Aorta (tissue), 5 donors: ENCODE measurements at regions of chr6 and their contacts with region 1.

Region 1: GRCh38 chr6:96563853-96564252 is 925 bp downstream of the FHL5 start:
- DNase-seq: no peak
- ATAC-seq: no peak
- H3K4me3 ChIP-seq: peak overlapping the region; percentile 59 to 95
- H3K27ac ChIP-seq: no peak overlapping the region
- H3K4me1 ChIP-seq: no peaks in the 10 kb centered on the region
- H3K27me3 ChIP-seq: no peaks in the 10 kb centered on the region

Region 2: GRCh38 chr6:96509281-96509680 is 54.6 kb before region 1 on chr6:
- intact Hi-C with region 1: no loop called
- DNase-seq: no peak
- ATAC-seq: no peak
- H3K4me3 ChIP-seq: no peak overlapping the region
- H3K27ac ChIP-seq: no peak overlapping the region
- H3K4me1 ChIP-seq: peaks cover 0 to 1% of the 10 kb centered on the region in 2 donors
- H3K27me3 ChIP-seq: no peaks in the 10 kb centered on the region

Region 3: GRCh38 chr6:96604420-96604819 is 40.6 kb after region 1 on chr6:
- intact Hi-C with region 1: loop called in 1 of 2 experiments (anchors 5 kb)
- DNase-seq: no peak
- ATAC-seq: no peak
- H3K4me3 ChIP-seq: no peak overlapping the region
- H3K27ac ChIP-seq: no peak overlapping the region
- H3K4me1 ChIP-seq: peaks cover 2 to 5% of the 10 kb centered on the region in 2 donors
- H3K27me3 ChIP-seq: no peaks in the 10 kb centered on the region

Region 4: DNA sequence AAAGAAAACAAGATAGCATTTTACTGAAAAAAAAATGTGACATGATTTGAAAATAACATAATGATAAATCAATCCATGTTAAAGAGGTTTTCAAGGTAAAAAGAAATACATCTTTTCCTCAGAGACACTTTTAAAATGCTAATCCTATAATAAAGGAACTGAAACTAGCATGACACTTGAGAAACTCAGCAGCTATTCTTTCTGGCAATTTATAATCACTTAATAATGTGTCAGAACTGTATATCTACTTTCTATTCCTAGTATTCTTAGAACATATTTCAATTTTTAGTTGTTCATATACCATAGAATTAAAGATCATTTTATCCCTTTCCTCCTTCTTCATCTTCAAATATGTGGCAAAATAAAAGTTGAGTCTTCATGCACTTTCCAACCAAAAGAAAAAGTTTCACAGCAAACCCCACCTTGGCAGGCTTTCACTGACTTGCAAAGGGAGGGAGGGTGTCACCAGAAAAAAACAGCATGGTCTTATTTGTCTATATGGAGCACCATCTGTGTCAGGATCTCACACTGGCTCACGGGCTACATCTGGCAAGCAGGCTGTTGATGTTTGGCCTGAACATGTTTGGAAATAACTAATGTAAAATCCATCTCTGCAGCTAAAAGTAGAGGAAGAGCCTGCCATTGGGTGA is 47.6 kb after region 1 on chr6:
- intact Hi-C with region 1: loop called in 1 of 2 experiments (anchors 10 kb)
- DNase-seq: no peak
- ATAC-seq: no peak
- H3K4me3 ChIP-seq: no peak overlapping the region
- H3K27ac ChIP-seq: no peak overlapping the region
- H3K4me1 ChIP-seq: peaks cover 5% of the 10 kb centered on the region in 2 donors
- H3K27me3 ChIP-seq: peaks cover 0 to 1% of the 10 kb centered on the region in 2 donors

Region 5: DNA sequence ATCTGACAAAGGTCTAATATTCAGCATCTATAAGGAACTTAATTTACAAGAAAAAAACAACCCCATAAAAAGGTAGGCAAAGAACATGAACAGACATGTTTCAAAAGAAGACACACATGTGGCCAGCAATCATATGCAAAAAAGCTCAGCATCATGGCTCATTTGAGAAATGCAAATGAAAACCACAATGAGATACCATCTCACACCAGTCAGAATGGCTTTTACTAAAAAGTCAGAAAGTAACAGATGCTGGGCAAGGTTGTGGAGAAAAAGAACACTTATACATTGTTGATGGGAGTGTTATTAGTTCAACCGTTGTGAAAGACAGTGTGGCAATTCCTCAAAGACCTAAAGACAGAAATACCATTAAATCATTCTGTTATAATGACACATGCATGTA is 1009.1 kb after region 1 on chr6:
- intact Hi-C with region 1: no loop called
- DNase-seq: no peak
- ATAC-seq: no peak
- H3K4me3 ChIP-seq: no peak overlapping the region
- H3K27ac ChIP-seq: no peak overlapping the region
- H3K4me1 ChIP-seq: no peaks in the 10 kb centered on the region
- H3K27me3 ChIP-seq: no peaks in the 10 kb centered on the region